Activated naive CD4-positive, alpha-beta T cell treated with anti-CD3 and anti-CD28 coated beads for 36 hours (primary cell): ENCODE measurements at regions of chr6 and their contacts with region 1.

Region 1: DNA sequence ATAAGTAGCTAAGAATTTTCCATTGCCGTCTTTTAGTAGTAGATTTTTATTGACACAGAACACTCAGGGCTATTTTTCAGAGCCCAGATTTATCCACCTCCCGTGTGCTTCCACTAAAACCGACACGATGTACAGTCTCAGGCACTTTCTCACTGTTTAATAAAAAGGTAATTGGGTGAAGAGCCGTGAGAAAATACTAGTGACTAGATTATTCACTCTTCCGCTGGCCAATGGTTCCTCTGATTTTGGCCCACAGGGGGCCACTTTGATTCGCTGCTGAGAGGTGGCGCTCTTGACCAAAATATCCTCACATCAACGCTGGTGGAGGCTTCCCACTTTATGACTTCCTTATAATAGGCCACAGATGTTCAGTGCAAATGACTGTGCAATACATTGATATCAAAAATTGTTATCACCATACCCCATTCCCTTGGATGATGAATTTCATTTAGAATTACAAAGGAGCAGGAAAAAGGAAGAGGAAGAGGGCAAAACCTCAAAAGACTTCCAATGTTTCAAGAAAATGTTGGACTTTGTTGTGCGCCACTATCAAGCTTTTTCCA is 12.3 kb upstream of the HDDC2 start:
- DNase-seq: peak; percentile 61
- H3K4me3 Mint-ChIP-seq: no peak overlapping the region
- H3K27ac Mint-ChIP-seq: no peak overlapping the region
- H3K4me1 Mint-ChIP-seq: no peaks in the 10 kb centered on the region
- H3K27me3 Mint-ChIP-seq: peaks cover 2% of the 10 kb centered on the region

Region 2: GRCh38 chr6:124870611-124871459 is 443.3 kb before region 1 on chr6:
- CTCF ChIA-PET with region 1: no interaction called
- intact Hi-C with region 1: loop called (anchors 1 kb)
- DNase-seq: no peak
- H3K4me3 Mint-ChIP-seq: no peak overlapping the region
- H3K27ac Mint-ChIP-seq: no peak overlapping the region
- H3K4me1 Mint-ChIP-seq: no peaks in the 10 kb centered on the region
- H3K27me3 Mint-ChIP-seq: no peaks in the 10 kb centered on the region

Region 3: GRCh38 chr6:125301435-125302391 is 12.4 kb before region 1 on chr6 and contains the start of gene HDDC2:
- CTCF ChIA-PET with region 1: interaction called, 11 read pairs
- intact Hi-C with region 1: no loop called
- DNase-seq: peak; percentile 38
- H3K4me3 Mint-ChIP-seq: peak within 1 kb of the TSS; percentile 88
- H3K27ac Mint-ChIP-seq: peak within 1 kb of the TSS; percentile 93
- H3K4me1 Mint-ChIP-seq: peaks cover 48% of the 10 kb centered on the region
- H3K27me3 Mint-ChIP-seq: no peaks in the 10 kb centered on the region
- total RNA-seq, gene HDDC2: 117 to 127 TPM

Region 4: DNA sequence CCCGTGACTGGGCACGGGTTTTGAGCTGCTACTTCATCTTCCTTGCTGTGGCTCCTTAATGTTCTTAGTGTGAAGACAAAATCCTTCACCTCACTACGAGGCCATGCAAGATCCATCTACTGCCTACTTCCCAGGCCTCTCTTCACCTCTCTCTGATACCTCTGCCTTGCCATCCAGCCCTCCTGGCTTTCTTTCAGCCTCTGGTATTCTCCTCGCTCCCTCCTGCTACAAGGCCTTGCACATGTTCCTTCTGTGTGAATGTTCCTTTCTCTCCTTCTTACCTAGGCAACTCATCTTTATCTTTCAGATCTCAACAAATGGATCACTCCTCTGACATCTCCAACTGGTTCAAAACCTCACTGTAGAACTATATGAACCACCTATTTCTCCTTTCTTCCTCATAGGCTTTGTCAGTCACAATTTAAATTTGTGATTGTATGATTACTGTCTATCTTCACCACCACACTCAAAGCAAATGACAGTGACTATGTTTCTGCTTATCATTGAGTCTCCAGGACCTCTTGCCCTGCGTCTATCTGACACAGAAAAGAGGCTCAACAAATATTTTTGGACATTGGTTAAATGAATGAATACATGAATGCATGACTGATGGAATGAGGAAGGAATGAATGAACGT is 455.2 kb after region 1 on chr6:
- CTCF ChIA-PET with region 1: interaction called, 10 read pairs
- intact Hi-C with region 1: loop called (anchors 1 kb)
- DNase-seq: no peak
- H3K4me3 Mint-ChIP-seq: no peak overlapping the region
- H3K27ac Mint-ChIP-seq: no peak overlapping the region
- H3K4me1 Mint-ChIP-seq: peaks cover 10% of the 10 kb centered on the region
- H3K27me3 Mint-ChIP-seq: peaks cover 3% of the 10 kb centered on the region

Region 5: DNA sequence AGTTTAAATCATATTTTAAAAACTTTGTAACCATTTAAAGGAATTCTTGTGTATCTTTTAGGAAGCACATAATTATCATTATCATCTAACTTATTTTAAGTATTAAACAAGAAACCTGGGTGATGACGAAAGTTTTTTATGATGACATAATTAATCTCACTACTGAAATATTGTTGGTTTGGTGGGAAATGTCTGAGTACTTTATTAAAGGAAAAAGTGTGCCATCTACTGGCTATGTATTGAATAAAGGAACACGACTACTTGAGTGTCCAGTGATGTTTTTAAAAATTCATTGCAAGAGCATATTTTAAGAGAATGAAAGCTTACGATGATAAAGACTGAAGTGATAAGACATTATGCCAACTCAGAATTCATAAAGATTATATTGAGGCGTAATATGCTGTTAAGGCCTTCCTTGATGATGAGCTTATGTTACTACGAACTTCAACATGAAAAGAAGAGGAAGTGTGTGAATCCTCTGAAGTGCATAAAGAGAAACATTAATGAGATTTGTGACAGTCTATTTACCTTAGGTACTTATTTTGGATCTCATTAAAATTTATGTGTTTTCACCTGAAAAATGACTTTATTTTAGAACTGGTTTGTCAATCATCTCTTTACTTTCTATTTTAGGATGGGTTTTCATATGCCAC is 660.2 kb after region 1 on chr6:
- CTCF ChIA-PET with region 1: interaction called, 4 read pairs
- intact Hi-C with region 1: loop called (anchors 1 kb)
- DNase-seq: no peak
- H3K4me3 Mint-ChIP-seq: no peak overlapping the region
- H3K27ac Mint-ChIP-seq: no peak overlapping the region
- H3K4me1 Mint-ChIP-seq: peaks cover 7% of the 10 kb centered on the region
- H3K27me3 Mint-ChIP-seq: no peaks in the 10 kb centered on the region

Region 6: DNA sequence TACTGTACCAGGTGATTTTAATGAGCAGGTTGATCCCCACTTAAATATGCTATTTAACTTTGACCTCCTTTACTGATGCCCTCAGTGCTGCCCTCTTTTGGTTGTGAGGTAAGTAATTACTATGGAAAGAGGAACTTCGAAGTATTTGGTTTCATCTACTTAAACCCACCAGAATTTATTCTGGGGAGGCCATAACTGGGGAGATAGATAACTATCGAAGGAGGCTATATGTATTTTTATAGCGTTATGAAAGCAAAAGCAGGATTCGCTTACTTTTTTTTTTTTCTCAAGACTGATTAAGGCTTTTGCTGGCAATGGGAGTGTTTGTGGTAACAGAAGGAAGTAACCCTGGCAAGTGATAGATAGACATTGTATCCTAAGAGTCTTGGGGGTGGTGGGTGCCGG is 856.9 kb after region 1 on chr6:
- CTCF ChIA-PET with region 1: no interaction called
- intact Hi-C with region 1: loop called (anchors 1 kb)
- DNase-seq: peak; percentile 39
- H3K4me3 Mint-ChIP-seq: no peak overlapping the region
- H3K27ac Mint-ChIP-seq: no peak overlapping the region
- H3K4me1 Mint-ChIP-seq: peaks cover 4% of the 10 kb centered on the region
- H3K27me3 Mint-ChIP-seq: no peaks in the 10 kb centered on the region